ENCODE measurements at regions of chr11 and their contacts with region 1.

Region 1: GRCh38 chr11:96207459-96208449 is 135.2 kb downstream of the MAML2 start:
- DNase-seq: peak; percentile 92
- ATAC-seq: peak; percentile 92
- H3K4me3 ChIP-seq: peak overlapping the region; percentile 37
- H3K27ac ChIP-seq: peak overlapping the region; percentile 85
- H3K4me1 ChIP-seq: peaks cover 36% of the 10 kb centered on the region
- H3K27me3 ChIP-seq: no peaks in the 10 kb centered on the region
- CTCF ChIP-seq: no peak

Region 2: DNA sequence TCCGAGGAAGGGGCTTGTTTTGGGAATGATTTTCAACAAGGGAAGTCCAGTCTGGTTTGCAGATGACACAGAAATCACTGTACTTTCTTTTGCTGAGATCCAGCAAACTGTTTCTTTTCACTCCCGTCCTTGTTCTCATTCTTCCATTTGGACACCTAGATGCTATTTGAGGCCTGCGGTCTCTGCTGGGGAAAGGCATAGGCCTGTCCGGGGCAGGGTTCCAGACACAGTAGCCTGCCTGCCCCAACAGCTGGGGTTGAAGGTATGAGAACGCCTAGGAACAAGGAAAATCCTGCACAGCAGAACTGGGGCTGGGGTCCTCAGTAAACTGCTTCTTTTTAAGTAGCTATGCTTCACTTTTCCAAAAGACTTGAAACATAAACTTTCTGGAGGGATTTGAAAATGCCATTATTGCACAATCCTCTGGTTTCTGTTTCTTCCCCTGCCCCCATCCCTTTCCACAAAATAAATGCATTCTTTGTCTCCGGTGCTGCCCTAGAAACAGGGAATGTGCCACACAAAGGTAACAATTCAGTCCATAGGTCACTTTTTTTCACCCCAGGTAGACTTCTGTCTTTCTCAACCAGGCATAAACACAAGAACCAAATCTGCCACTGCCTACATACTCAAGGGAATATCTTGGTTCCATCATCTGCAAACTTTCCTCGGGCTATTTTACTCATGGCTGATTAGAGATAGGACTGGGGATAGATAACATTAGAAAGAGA is 109.1 kb before region 1 on chr11:
- CTCF ChIA-PET with region 1: no interaction called
- POLR2A ChIA-PET with region 1: no interaction called
- intact Hi-C with region 1: loop called (anchors 5 kb)
- DNase-seq: peak; percentile 80
- ATAC-seq: peak; percentile 6
- H3K4me3 ChIP-seq: peak overlapping the region; percentile 11; the same call in 1 of the 2 replicates
- H3K27ac ChIP-seq: peak overlapping the region; percentile 86
- H3K4me1 ChIP-seq: peaks cover 65% of the 10 kb centered on the region
- H3K27me3 ChIP-seq: no peaks in the 10 kb centered on the region
- CTCF ChIP-seq: no peak

Region 3: DNA sequence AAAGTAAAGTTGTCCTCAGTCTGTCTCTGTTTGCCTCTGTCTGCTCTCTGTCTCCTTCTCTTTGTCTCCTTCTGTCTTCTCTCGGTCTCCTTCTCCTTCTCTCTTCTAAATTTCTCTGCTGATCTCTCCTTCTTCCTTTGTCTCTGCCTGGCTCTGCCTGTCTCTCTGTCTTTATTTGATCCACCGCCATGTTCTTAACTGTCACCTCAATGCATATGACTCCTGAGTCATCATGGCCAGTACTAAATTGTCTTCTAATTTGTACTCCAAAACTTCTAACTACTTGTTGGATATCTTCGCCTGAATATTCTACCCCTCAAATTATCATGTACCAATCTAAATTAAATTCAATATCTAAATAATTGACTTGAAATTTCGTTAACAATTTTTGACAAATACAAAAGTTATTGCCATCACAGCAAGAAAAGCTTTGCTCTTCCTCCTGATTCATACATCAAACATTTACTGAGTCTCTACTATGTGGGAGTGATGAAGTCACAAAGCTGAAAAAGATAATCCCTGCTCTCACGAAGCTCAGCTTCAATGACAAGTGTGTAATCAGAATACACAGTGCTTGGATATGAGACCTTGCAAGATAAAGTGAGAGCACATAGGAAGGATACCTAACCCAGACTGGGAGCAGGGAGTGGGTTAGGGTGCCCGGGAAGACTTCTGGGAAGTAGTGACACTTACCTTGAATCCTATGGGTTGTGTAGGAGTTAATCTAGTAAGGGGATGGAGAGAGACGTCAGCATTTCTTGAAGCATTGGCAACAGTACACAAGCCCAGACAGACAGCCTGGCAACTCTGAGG is 57.8 kb before region 1 on chr11:
- CTCF ChIA-PET with region 1: no interaction called
- POLR2A ChIA-PET with region 1: no interaction called
- intact Hi-C with region 1: loop called (anchors 2 kb)
- DNase-seq: peak; percentile 77
- ATAC-seq: peak; percentile 47
- H3K4me3 ChIP-seq: no peak overlapping the region
- H3K27ac ChIP-seq: peak overlapping the region; percentile 88
- H3K4me1 ChIP-seq: peaks cover 52% of the 10 kb centered on the region
- H3K27me3 ChIP-seq: no peaks in the 10 kb centered on the region
- CTCF ChIP-seq: no peak

Region 4: DNA sequence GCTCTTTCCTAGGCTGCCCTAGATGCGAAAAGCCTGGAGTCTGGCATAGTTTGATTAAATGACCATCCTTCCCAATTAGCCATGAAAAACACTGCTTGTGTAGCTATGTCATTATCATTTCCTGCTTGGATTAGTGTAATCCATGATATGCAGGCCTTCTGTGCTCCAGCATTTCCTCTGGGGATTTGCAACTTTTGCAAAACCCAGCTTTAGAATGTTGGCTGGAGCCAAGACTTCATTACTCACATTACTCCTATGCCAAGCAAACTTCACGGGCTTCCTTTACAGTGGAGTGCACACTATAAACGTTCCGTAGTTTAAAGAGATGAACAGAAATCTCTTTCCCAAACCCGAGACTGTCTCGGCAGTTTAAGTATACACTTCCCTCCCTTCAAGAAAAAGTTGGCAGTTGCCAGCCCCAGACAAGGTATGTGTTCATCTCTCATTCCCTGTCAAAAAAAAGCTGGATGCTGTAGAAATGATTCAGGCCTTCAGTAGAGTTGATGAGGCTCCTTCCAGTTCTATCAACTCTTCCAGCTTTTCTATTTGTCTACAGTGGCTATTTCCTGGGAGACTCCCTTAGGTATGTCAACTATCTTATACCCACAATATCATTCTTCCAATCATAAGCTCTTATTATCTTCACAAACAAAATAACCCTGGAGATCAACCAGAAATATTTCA is 44.8 kb before region 1 on chr11:
- CTCF ChIA-PET with region 1: no interaction called
- POLR2A ChIA-PET with region 1: no interaction called
- intact Hi-C with region 1: loop called (anchors 1 kb)
- DNase-seq: peak; percentile 63
- ATAC-seq: peak; percentile 66
- H3K4me3 ChIP-seq: no peak overlapping the region
- H3K27ac ChIP-seq: peak overlapping the region; percentile 73
- H3K4me1 ChIP-seq: peaks cover 32% of the 10 kb centered on the region
- H3K27me3 ChIP-seq: no peaks in the 10 kb centered on the region
- CTCF ChIP-seq: no peak

Measured in PC-3 (cell line).